Sciatic nerve (tissue), 2 donors: ENCODE measurements at regions of chr6 and their contacts with region 1.

Region 1: GRCh38 chr6:27503436-27504030 is 30.6 kb upstream of the ZNF184 start:
- DNase-seq: peak; percentile 79
- ATAC-seq: peak; percentile 94

Region 2: GRCh38 chr6:27743818-27744217 is 240.3 kb after region 1 on chr6:
- intact Hi-C with region 1: loop called (anchors 10 kb)
- DNase-seq: no peak
- ATAC-seq: no peak